ENCODE measurements at regions of chr18 and their contacts with region 1.

Region 1: GRCh38 chr18:44841752-44842587 is 161.3 kb downstream of the SETBP1 start:
- DNase-seq: no peak
- ATAC-seq: no peak

Region 2: GRCh38 chr18:44882163-44882868 is 40.3 kb after region 1 on chr18:
- intact Hi-C with region 1: loop called (anchors 1 kb)
- DNase-seq: no peak
- ATAC-seq: no peak